ENCODE measurements at regions of chr3 and their contacts with region 1.

Region 1: DNA sequence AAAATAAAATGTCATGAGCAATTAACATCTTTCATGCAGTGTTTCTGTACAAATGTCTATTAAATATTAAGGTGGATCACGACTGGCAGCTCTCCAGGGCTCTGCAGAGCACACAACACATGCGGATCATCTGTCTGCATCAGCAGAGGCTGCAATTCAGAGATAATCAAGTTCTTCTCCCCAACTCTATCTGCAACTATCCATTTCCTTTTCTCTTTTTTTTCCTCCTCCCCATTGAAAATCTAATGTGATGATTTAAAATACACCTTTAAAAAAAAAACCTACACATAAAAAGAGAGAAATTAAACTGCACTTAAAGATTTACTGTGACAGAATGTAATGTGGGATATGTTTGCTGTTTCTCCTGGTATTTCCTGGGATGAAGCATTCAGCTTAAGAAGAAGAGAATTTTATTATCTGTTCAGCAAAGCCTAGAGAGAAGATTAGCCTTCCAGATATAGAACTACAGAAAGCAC is 352.6 kb upstream of the CCDC54 start:
- DNase-seq: no peak
- H3K4me3 Mint-ChIP-seq: no peak overlapping the region
- H3K27ac Mint-ChIP-seq: no peak overlapping the region
- H3K4me1 Mint-ChIP-seq: no peaks in the 10 kb centered on the region
- H3K27me3 Mint-ChIP-seq: no peaks in the 10 kb centered on the region
- CTCF ChIP-seq: no peak

Region 2: GRCh38 chr3:106228271-106228670 is 796.3 kb before region 1 on chr3:
- CTCF ChIA-PET with region 1: no interaction called
- intact Hi-C with region 1: no loop called
- DNase-seq: no peak
- H3K4me3 Mint-ChIP-seq: no peak overlapping the region
- H3K27ac Mint-ChIP-seq: no peak overlapping the region
- H3K4me1 Mint-ChIP-seq: no peaks in the 10 kb centered on the region
- H3K27me3 Mint-ChIP-seq: no peaks in the 10 kb centered on the region
- CTCF ChIP-seq: no peak

Region 3: DNA sequence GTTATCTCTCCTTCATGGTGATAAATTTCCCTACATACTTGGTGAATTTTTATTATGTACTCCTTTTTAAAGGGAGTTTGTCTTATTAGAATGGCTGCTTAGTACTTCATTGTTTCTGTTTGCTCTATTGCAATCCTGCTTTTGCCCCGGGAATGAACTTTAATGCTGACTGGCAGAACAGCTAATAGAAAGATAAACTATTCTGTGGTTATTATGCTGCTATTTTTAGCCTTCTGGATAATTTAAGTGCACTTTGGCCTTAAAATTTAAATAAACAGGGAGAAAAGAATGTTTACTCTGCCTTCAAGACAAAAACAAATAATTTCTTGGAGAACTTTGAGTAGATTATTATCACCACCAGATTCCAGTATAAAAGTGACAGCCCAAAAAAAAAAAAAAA is 61.1 kb before region 1 on chr3:
- CTCF ChIA-PET with region 1: no interaction called
- intact Hi-C with region 1: loop called (anchors 10 kb)
- DNase-seq: peak; percentile 7
- H3K4me3 Mint-ChIP-seq: no peak overlapping the region
- H3K27ac Mint-ChIP-seq: peak overlapping the region; percentile 13
- H3K4me1 Mint-ChIP-seq: peaks cover 13% of the 10 kb centered on the region
- H3K27me3 Mint-ChIP-seq: no peaks in the 10 kb centered on the region
- CTCF ChIP-seq: no peak

Measured in Calu3 (cell line).